Activated CD4-positive, alpha-beta memory T cell treated with anti-CD3 and anti-CD28 coated beads for 36 hours (primary cell): ENCODE measurements at regions of chr22 and their contacts with region 1.

Region 1: GRCh38 chr22:40922484-40923303 is 28.5 kb upstream of the RBX1 start:
- DNase-seq: no peak
- H3K4me3 Mint-ChIP-seq: no peak overlapping the region
- H3K27ac Mint-ChIP-seq: no peak overlapping the region
- H3K4me1 Mint-ChIP-seq: peaks cover 4% of the 10 kb centered on the region
- H3K27me3 Mint-ChIP-seq: no peaks in the 10 kb centered on the region

Region 2: GRCh38 chr22:40560551-40560950 is 362.1 kb before region 1 on chr22:
- CTCF ChIA-PET with region 1: no interaction called
- POLR2A ChIA-PET with region 1: no interaction called
- intact Hi-C with region 1: no loop called
- DNase-seq: peak; percentile 47
- H3K4me3 Mint-ChIP-seq: no peak overlapping the region
- H3K27ac Mint-ChIP-seq: peak overlapping the region; percentile 30
- H3K4me1 Mint-ChIP-seq: peaks cover 20% of the 10 kb centered on the region
- H3K27me3 Mint-ChIP-seq: no peaks in the 10 kb centered on the region

Region 3: GRCh38 chr22:40911772-40912171 is 10.9 kb before region 1 on chr22:
- CTCF ChIA-PET with region 1: interaction called, 13 read pairs
- POLR2A ChIA-PET with region 1: no interaction called
- intact Hi-C with region 1: no loop called
- DNase-seq: no peak
- H3K4me3 Mint-ChIP-seq: no peak overlapping the region
- H3K27ac Mint-ChIP-seq: no peak overlapping the region
- H3K4me1 Mint-ChIP-seq: no peaks in the 10 kb centered on the region
- H3K27me3 Mint-ChIP-seq: no peaks in the 10 kb centered on the region

Region 4: DNA sequence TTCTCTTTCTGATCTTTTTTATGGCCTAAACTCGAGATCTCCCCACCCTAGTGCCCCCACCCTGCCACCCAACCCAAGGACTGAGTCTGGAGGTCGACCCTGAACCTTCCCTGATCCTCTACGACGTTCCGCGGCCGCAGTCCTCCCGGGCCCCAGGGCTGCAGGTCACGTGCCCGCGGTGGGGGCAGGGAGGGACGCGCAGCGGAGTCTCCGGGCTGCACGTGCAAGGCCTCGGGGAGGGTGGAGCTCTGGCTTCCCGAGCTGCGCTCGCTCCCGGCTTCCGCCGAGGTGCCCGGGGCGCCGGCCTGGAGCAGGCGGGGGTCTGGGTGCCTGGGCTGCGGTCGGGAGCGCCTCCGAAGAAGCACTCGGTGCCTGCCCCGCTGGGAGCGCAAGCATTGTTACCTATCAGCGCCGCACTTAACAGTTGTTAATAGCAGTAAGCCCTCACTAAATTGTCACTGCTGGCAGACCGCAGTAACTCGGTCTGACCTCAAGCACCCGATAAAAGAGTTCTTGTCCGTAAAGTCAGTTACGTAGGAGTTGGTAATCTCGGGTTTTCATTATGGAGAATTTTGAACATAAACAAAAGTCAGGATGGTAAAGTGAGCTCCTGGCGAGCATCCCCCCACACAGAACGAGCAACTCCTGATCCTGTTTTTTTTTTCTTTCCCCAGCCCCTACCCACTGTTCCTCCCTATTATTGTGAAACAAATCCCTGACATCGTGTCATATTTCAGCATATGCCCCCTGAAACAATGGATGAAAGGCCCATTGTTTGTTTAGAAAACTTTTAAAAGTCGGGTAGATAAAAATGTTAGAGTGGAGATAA is 100.0 kb after region 1 on chr22:
- CTCF ChIA-PET with region 1: interaction called, 18 read pairs
- POLR2A ChIA-PET with region 1: no interaction called
- intact Hi-C with region 1: no loop called
- DNase-seq: peak; percentile 90
- H3K4me3 Mint-ChIP-seq: peak overlapping the region; percentile 79
- H3K27ac Mint-ChIP-seq: peak overlapping the region; percentile 70
- H3K4me1 Mint-ChIP-seq: peaks cover 14% of the 10 kb centered on the region
- H3K27me3 Mint-ChIP-seq: no peaks in the 10 kb centered on the region

Region 5: DNA sequence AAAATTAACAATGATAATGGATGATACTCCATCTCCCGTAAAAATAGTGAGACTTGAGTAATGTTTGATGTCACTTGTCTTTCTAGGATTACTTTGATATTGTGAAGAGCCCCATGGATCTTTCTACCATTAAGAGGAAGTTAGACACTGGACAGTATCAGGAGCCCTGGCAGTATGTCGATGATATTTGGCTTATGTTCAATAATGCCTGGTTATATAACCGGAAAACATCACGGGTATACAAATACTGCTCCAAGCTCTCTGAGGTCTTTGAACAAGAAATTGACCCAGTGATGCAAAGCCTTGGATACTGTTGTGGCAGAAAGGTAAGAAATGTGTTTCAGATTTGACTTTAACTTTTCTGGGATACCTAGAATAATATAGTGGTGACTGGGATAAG is 234.4 kb after region 1 on chr22:
- CTCF ChIA-PET with region 1: interaction called, 13 read pairs
- POLR2A ChIA-PET with region 1: no interaction called
- intact Hi-C with region 1: no loop called
- DNase-seq: no peak
- H3K4me3 Mint-ChIP-seq: no peak overlapping the region
- H3K27ac Mint-ChIP-seq: no peak overlapping the region
- H3K4me1 Mint-ChIP-seq: no peaks in the 10 kb centered on the region
- H3K27me3 Mint-ChIP-seq: no peaks in the 10 kb centered on the region

Region 6: GRCh38 chr22:41237707-41238569 is 315.2 kb after region 1 on chr22:
- CTCF ChIA-PET with region 1: interaction called, 139 read pairs
- POLR2A ChIA-PET with region 1: no interaction called
- intact Hi-C with region 1: loop called (anchors 1 kb)
- DNase-seq: peak; percentile 89
- H3K4me3 Mint-ChIP-seq: no peak overlapping the region
- H3K27ac Mint-ChIP-seq: no peak overlapping the region
- H3K4me1 Mint-ChIP-seq: peaks cover 11% of the 10 kb centered on the region
- H3K27me3 Mint-ChIP-seq: no peaks in the 10 kb centered on the region